CD4-positive, alpha-beta T cell (primary cell): ENCODE measurements at regions of chr1 and their contacts with region 1.

Region 1: GRCh38 chr1:40373338-40374283 is at the start of gene SMAP2:
- DNase-seq: peak; percentile 89 to 98 (median 95)
- ATAC-seq: peak; percentile 78
- H3K4me3 ChIP-seq: peak within 1 kb of the TSS; percentile 89
- H3K4me3 Mint-ChIP-seq: peak within 1 kb of the TSS; percentile 100
- H3K27ac ChIP-seq: peak within 1 kb of the TSS; percentile 93 to 99
- H3K27ac Mint-ChIP-seq: peak within 1 kb of the TSS; percentile 99
- H3K4me1 ChIP-seq: peaks cover 36% of the 10 kb centered on the region
- H3K4me1 Mint-ChIP-seq: peaks cover 58% of the 10 kb centered on the region
- H3K27me3 ChIP-seq: no peaks in the 10 kb centered on the region
- H3K27me3 Mint-ChIP-seq: peaks cover 7% of the 10 kb centered on the region
- CTCF ChIP-seq: no peak
- total RNA-seq, gene SMAP2: 214 to 216 TPM

Region 2: GRCh38 chr1:40299366-40300248 is 74.0 kb before region 1 on chr1:
- CTCF ChIA-PET with region 1: no interaction called
- POLR2A ChIA-PET with region 1: no interaction called
- intact Hi-C with region 1: no loop called
- DNase-seq: no peak
- ATAC-seq: no peak
- H3K4me3 ChIP-seq: no peak overlapping the region
- H3K4me3 Mint-ChIP-seq: no peak overlapping the region
- H3K27ac ChIP-seq: no peak overlapping the region
- H3K27ac Mint-ChIP-seq: no peak overlapping the region
- H3K4me1 ChIP-seq: no peaks in the 10 kb centered on the region
- H3K4me1 Mint-ChIP-seq: no peaks in the 10 kb centered on the region
- H3K27me3 ChIP-seq: no peaks in the 10 kb centered on the region
- H3K27me3 Mint-ChIP-seq: no peaks in the 10 kb centered on the region
- CTCF ChIP-seq: no peak

Region 3: DNA sequence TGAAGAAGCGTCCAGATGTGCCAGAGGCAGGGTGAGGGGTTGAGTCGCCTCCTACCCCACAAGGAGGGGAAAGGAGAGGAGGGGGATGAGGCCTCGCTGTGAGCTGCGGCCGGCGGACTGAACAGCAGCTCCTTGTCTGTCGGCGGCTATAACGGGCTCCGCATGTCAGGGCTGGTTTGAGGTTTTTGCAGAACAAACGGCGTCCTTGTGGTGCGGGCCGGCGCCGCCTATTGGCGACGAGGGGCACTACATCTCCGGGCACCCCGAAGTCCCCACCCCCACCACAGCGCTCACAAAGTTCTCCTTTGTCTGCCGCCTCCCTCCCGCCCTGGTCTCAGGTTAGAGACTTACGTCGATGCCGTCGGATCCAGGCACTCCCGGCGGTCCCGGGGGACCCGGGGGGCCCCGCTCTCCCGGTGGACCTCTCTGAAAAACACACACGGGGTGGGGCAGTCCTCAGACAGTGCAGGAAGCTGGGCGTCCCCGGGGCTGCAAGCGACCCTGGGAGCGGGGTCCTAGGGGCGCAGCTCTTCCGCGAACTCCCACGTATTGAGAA is 58.3 kb before region 1 on chr1:
- CTCF ChIA-PET with region 1: interaction called, 3 read pairs
- POLR2A ChIA-PET with region 1: interaction called, 17 read pairs
- intact Hi-C with region 1: no loop called
- DNase-seq: peak; percentile 78 to 94 (median 84)
- ATAC-seq: peak; percentile 84
- H3K4me3 ChIP-seq: peak overlapping the region; percentile 77
- H3K4me3 Mint-ChIP-seq: peak overlapping the region; percentile 90
- H3K27ac ChIP-seq: no peak overlapping the region
- H3K27ac Mint-ChIP-seq: peak overlapping the region; percentile 64
- H3K4me1 ChIP-seq: peaks cover 51% of the 10 kb centered on the region
- H3K4me1 Mint-ChIP-seq: peaks cover 37% of the 10 kb centered on the region
- H3K27me3 ChIP-seq: peaks cover 0 to 11% of the 10 kb centered on the region in 2 experiments
- H3K27me3 Mint-ChIP-seq: peaks cover 24% of the 10 kb centered on the region
- CTCF ChIP-seq: peak; percentile 79

Region 4: GRCh38 chr1:40332695-40333094 is 40.9 kb before region 1 on chr1:
- CTCF ChIA-PET with region 1: no interaction called
- POLR2A ChIA-PET with region 1: no interaction called
- intact Hi-C with region 1: no loop called
- DNase-seq: no peak
- ATAC-seq: no peak
- H3K4me3 ChIP-seq: no peak overlapping the region
- H3K4me3 Mint-ChIP-seq: no peak overlapping the region
- H3K27ac ChIP-seq: no peak overlapping the region
- H3K27ac Mint-ChIP-seq: no peak overlapping the region
- H3K4me1 ChIP-seq: no peaks in the 10 kb centered on the region
- H3K4me1 Mint-ChIP-seq: no peaks in the 10 kb centered on the region
- H3K27me3 ChIP-seq: no peaks in the 10 kb centered on the region
- H3K27me3 Mint-ChIP-seq: no peaks in the 10 kb centered on the region
- CTCF ChIP-seq: no peak

Region 5: GRCh38 chr1:40344597-40344996 is 29.0 kb before region 1 on chr1:
- CTCF ChIA-PET with region 1: no interaction called
- POLR2A ChIA-PET with region 1: interaction called, 33 read pairs
- intact Hi-C with region 1: no loop called
- DNase-seq: peak in 8 of 14 experiments; percentile 7 to 64 (median 26)
- ATAC-seq: peak; percentile 80
- H3K4me3 ChIP-seq: no peak overlapping the region
- H3K4me3 Mint-ChIP-seq: peak overlapping the region; percentile 27
- H3K27ac ChIP-seq: no peak overlapping the region
- H3K27ac Mint-ChIP-seq: peak overlapping the region; percentile 45
- H3K4me1 ChIP-seq: peaks cover 27% of the 10 kb centered on the region
- H3K4me1 Mint-ChIP-seq: peaks cover 49% of the 10 kb centered on the region
- H3K27me3 ChIP-seq: no peaks in the 10 kb centered on the region
- H3K27me3 Mint-ChIP-seq: no peaks in the 10 kb centered on the region
- CTCF ChIP-seq: no peak

Region 6: DNA sequence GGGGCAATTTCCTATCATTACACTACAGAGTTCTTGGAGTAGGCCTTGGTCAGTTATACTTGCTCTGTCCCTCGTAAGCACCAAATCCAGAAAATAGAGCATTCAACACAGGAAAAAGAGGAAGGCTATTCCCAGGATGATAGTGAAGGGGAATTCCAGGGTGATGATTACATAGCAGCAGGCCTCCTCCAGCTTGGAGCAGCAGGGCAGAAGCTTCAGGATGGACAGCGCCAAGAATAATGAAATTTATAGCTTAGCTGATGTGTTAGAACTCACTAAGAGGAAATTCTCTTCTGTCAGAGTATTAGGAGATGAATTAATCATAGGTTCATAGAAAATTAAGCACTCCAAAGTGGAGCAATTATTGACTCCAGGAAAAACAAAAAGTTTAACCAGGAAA is 10.9 kb before region 1 on chr1:
- CTCF ChIA-PET with region 1: no interaction called
- POLR2A ChIA-PET with region 1: no interaction called
- intact Hi-C with region 1: no loop called
- DNase-seq: no peak
- ATAC-seq: no peak
- H3K4me3 ChIP-seq: no peak overlapping the region
- H3K4me3 Mint-ChIP-seq: no peak overlapping the region
- H3K27ac ChIP-seq: no peak overlapping the region
- H3K27ac Mint-ChIP-seq: no peak overlapping the region
- H3K4me1 ChIP-seq: peaks cover 3% of the 10 kb centered on the region
- H3K4me1 Mint-ChIP-seq: no peaks in the 10 kb centered on the region
- H3K27me3 ChIP-seq: no peaks in the 10 kb centered on the region
- H3K27me3 Mint-ChIP-seq: no peaks in the 10 kb centered on the region
- CTCF ChIP-seq: no peak

Region 7: GRCh38 chr1:40385437-40386358 is 12.1 kb after region 1 on chr1:
- CTCF ChIA-PET with region 1: interaction called, 11 read pairs
- POLR2A ChIA-PET with region 1: interaction called, 304 read pairs
- intact Hi-C with region 1: loop called in 1 of 2 experiments (anchors 1 kb)
- DNase-seq: peak in 13 of 14 experiments; percentile 19 to 95 (median 49)
- ATAC-seq: peak; percentile 69
- H3K4me3 ChIP-seq: peak overlapping the region; percentile 42
- H3K4me3 Mint-ChIP-seq: peak overlapping the region; percentile 83
- H3K27ac ChIP-seq: peak overlapping the region; percentile 92 to 95
- H3K27ac Mint-ChIP-seq: peak overlapping the region; percentile 96
- H3K4me1 ChIP-seq: peaks cover 86% of the 10 kb centered on the region
- H3K4me1 Mint-ChIP-seq: peaks cover 87% of the 10 kb centered on the region
- H3K27me3 ChIP-seq: no peaks in the 10 kb centered on the region
- H3K27me3 Mint-ChIP-seq: no peaks in the 10 kb centered on the region
- CTCF ChIP-seq: no peak

Region 8: GRCh38 chr1:40392221-40392620 is 18.6 kb after region 1 on chr1:
- CTCF ChIA-PET with region 1: interaction called, 5 read pairs
- POLR2A ChIA-PET with region 1: interaction called, 304 read pairs
- intact Hi-C with region 1: no loop called
- DNase-seq: no peak
- ATAC-seq: no peak
- H3K4me3 ChIP-seq: no peak overlapping the region
- H3K4me3 Mint-ChIP-seq: peak overlapping the region; percentile 89
- H3K27ac ChIP-seq: peak overlapping the region; percentile 72 to 95
- H3K27ac Mint-ChIP-seq: peak overlapping the region; percentile 96
- H3K4me1 ChIP-seq: peaks cover 89% of the 10 kb centered on the region
- H3K4me1 Mint-ChIP-seq: peaks cover 94% of the 10 kb centered on the region
- H3K27me3 ChIP-seq: no peaks in the 10 kb centered on the region
- H3K27me3 Mint-ChIP-seq: no peaks in the 10 kb centered on the region
- CTCF ChIP-seq: no peak

Region 9: GRCh38 chr1:40404670-40405462 is 31.3 kb after region 1 on chr1:
- CTCF ChIA-PET with region 1: interaction called, 19 read pairs
- POLR2A ChIA-PET with region 1: interaction called, 35 read pairs
- intact Hi-C with region 1: loop called (anchors 5 kb)
- DNase-seq: peak in 7 of 14 experiments; percentile 25 to 86 (median 65)
- ATAC-seq: peak; percentile 81
- H3K4me3 ChIP-seq: no peak overlapping the region
- H3K4me3 Mint-ChIP-seq: peak overlapping the region; percentile 50
- H3K27ac ChIP-seq: peak overlapping the region; percentile 33 to 48
- H3K27ac Mint-ChIP-seq: peak overlapping the region; percentile 86
- H3K4me1 ChIP-seq: peaks cover 47% of the 10 kb centered on the region
- H3K4me1 Mint-ChIP-seq: peaks cover 63% of the 10 kb centered on the region
- H3K27me3 ChIP-seq: no peaks in the 10 kb centered on the region
- H3K27me3 Mint-ChIP-seq: no peaks in the 10 kb centered on the region
- CTCF ChIP-seq: peak; percentile 94